A673 (cell line): ENCODE measurements at regions of chr6 and their contacts with region 1.

Region 1: DNA sequence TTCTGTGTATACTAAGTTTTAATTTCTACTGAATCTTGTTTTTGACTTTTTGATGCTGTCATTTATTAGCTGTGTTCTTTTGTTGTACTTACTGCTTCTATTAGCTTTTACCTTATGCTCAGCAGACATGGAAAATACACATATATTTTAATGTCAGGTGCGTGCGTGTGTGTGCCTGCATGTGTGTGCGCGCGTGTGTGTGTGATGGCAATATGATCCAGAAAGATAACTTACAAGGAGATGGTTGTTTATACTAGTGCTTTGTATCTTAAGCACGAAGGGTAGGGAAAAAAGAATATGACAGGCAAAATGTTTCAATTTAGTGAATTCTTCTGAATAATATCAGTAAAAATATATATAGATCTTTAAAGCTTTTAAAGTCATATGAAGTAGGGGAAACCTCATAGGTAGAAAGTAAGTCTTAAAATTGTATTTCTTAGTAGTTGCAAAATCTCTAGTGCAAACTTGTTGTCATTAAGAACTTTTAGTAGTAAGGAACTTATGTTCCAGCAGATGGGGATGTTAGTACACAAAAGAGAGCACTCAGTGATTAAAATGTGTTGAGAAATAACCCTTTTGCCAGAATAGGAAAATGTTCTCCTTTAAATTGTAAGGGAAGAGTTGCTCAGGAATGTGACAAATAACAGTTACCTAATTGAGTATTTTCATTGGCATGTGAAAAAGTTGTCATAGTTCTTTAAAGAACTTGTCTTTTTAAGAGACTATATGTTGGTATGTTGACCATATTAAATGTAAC is 13.2 kb downstream of the QKI start:
- DNase-seq: peak; percentile 82
- H3K4me3 ChIP-seq: no peak overlapping the region
- H3K27ac ChIP-seq: no peak overlapping the region
- H3K4me1 ChIP-seq: peaks cover 42% of the 10 kb centered on the region
- H3K27me3 ChIP-seq: no peaks in the 10 kb centered on the region
- CTCF ChIP-seq: peak; percentile 64; the same call in 1 of the 2 replicates

Region 2: GRCh38 chr6:163438940-163439335 is 11.3 kb after region 1 on chr6:
- CTCF ChIA-PET with region 1: no interaction called
- POLR2A ChIA-PET with region 1: no interaction called
- intact Hi-C with region 1: no loop called
- DNase-seq: peak; percentile 32
- H3K4me3 ChIP-seq: no peak overlapping the region
- H3K27ac ChIP-seq: no peak overlapping the region
- H3K4me1 ChIP-seq: peaks cover 3% of the 10 kb centered on the region
- H3K27me3 ChIP-seq: no peaks in the 10 kb centered on the region
- CTCF ChIP-seq: no peak

Region 3: DNA sequence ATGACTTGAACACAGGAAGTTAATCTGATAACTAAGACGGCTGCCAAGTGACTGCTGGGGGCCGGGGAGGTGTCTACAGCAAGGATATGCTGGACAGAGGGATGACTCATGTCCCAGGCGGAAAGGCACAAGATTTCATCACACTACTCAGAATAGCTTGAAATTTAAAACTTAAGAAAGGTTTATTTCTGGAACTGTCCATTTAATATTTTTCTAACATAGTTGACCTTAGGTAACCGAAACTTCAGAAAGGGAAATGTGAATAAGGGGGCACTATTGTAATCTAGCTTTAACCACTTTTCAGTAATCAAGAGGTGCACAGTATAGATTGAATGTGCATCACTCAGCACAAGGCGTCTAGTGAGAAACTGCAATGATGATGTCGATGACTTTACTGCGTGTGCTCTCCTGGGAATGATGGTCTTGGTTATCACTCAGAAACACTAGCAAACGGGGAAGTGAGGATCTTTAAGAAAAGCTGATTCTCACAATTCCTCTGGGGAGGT is 158.3 kb after region 1 on chr6:
- CTCF ChIA-PET with region 1: no interaction called
- POLR2A ChIA-PET with region 1: no interaction called
- intact Hi-C with region 1: loop called (anchors 10 kb)
- DNase-seq: peak; percentile 93
- H3K4me3 ChIP-seq: no peak overlapping the region
- H3K27ac ChIP-seq: peak overlapping the region; percentile 41
- H3K4me1 ChIP-seq: peaks cover 38% of the 10 kb centered on the region
- H3K27me3 ChIP-seq: no peaks in the 10 kb centered on the region
- CTCF ChIP-seq: no peak

Region 4: DNA sequence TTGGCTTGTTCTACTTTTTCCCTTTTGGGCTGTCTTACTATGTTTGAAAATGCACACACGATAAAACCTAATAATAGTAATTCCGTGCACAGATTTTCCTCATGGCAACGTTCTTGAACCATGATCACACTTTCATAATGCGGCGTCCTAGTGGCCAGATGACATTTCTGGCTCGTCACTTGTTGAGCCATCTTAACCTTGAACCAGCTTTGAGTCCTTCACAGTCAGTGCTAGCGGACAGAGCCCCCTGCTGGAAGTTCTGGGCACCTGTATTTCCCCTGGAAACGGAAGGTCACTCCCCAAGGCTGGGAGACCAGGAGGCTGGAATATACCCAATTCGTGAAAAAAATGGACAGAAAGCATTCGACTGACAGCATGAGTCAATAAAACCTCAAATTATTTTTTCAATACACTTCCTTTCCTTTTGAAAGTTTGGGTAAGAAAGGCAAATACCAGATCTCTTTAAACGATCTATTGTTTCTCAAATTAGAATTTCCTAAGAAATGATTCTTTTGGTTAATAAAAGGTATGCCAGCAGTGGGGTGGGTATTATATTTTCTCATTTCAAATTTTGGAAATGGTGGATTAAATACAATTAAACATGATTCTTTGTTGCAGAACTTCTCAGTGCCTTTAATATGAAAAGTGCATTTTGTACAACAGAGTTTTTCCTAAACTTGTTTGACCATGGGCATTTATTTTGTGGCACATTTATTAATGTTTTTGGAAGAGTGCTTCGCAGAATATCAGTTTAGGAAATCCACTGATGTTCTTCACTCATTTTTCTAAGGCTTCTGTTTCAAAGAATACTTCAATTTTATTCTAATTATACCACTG is 529.1 kb after region 1 on chr6:
- CTCF ChIA-PET with region 1: no interaction called
- POLR2A ChIA-PET with region 1: no interaction called
- intact Hi-C with region 1: loop called (anchors 1 kb)
- DNase-seq: peak; percentile 81
- H3K4me3 ChIP-seq: no peak overlapping the region
- H3K27ac ChIP-seq: no peak overlapping the region
- H3K4me1 ChIP-seq: no peaks in the 10 kb centered on the region
- H3K27me3 ChIP-seq: no peaks in the 10 kb centered on the region
- CTCF ChIP-seq: peak; percentile 94

Region 5: DNA sequence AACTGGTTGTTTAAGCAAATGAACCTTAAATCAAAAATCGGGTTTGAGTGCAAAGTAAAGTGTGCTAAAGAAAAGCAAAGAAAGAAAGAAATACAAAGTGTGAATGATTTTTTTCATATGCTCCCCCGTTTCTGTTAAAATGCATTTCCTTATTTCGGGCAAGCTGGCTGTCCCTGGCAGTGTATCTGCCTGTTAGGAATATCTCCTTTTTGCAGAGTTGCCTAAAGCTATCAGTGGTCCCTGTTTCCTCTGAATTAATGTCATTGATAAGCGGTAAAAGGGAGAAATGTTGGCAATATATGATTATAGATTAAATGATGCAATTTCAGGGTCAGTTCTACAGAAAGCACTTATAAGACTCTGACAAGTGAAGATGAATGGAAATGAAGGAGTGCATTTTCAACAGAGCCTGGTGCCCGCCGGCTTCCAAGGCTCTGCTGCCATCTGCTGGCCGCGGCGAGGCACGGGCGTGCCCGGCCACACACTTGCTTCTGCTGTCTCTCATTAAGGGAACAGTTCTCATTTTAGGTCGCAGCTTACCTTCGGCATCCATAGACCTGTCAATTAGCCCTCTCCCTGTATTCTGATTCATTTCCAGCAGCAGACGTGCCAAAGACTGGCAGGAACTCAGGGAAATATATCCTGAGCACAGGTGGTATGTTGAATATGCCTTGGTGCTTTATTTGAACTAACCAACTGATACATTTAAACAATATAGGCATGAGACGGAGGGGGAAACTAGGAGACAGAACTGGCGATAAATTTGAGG is 1499.8 kb after region 1 on chr6:
- CTCF ChIA-PET with region 1: no interaction called
- POLR2A ChIA-PET with region 1: no interaction called
- intact Hi-C with region 1: loop called (anchors 5 kb)
- DNase-seq: peak; percentile 65
- H3K4me3 ChIP-seq: no peak overlapping the region
- H3K27ac ChIP-seq: no peak overlapping the region
- H3K4me1 ChIP-seq: no peaks in the 10 kb centered on the region
- H3K27me3 ChIP-seq: no peaks in the 10 kb centered on the region
- CTCF ChIP-seq: peak; percentile 94